ENCODE measurements at regions of chr22 and their contacts with region 1.

Region 1: GRCh38 chr22:21894799-21895198 is 27.4 kb upstream of the MAPK1 start:
- DNase-seq: no peak
- ATAC-seq: no peak

Region 2: DNA sequence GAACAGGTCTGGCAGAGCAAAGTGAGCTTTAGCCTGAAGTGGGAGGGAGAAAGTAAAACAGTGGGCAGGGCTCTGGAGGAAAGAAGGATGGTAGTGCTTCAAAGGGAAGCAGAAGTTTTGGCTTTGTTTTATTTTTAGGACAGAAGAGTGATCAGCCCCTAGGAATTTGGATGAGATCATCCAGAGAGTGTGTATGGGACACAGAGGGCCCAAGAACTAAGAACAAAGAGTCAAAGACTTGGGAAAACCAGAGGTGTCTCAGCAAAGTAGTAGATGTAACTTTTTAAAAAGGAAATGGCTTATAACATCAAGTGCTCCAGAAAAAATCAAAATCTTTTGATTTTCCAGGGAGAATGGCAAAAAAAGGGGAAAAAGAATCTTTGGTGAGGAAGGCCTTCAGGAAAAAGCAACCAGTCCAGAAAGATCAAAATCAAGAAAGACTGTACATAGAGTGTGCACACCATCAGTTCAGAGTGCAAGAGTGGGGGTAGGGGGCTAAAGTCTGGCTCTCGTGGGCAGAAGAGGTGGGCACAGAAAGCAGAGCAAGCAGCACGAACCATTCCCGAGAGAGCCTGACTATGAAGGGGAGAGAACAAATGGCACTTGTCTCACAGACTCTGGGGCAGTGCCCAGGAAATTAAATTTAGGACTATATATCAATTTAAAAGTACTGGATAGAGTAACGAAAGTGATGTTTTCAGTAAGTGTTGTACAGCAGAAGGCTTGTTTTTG is 57.4 kb before region 1 on chr22:
- intact Hi-C with region 1: no loop called
- DNase-seq: no peak
- ATAC-seq: peak; percentile 92

Region 3: GRCh38 chr22:21921729-21922128 is 26.9 kb after region 1 on chr22:
- intact Hi-C with region 1: loop called (anchors 2 kb)
- DNase-seq: no peak
- ATAC-seq: no peak